ENCODE measurements at regions of chr7 and their contacts with region 1.

Region 1: GRCh38 chr7:112206238-112207044 is at the starts of genes DOCK4 and ZNF277:
- DNase-seq: peak; percentile 99
- H3K4me3 Mint-ChIP-seq: peak within 1 kb of the TSS; percentile 86
- H3K27ac Mint-ChIP-seq: peak within 1 kb of the TSS; percentile 73
- H3K4me1 Mint-ChIP-seq: peaks cover 27% of the 10 kb centered on the region
- H3K27me3 Mint-ChIP-seq: peaks cover 30% of the 10 kb centered on the region
- total RNA-seq, gene DOCK4: 0.36 to 1.1 TPM
- total RNA-seq, gene ZNF277: 24.9 to 26.6 TPM

Region 2: DNA sequence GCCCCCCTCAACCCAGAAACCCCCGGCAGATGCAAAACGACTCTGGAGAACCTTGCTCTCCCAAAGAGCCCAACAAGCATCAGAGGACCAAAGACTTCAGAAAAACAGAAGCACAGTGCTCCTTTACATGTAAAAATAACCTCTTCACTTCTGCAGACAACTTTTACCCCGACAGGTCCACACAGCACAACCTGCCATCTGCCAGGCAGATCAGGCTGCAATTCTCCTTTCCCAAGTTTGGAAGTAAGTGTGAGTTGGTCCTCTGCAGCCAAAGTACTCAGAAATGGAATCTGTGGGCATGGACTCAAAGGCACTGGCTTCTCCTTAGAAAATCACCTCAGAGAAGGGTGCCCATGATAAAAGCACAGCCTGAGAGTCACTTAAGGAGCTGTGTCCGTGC is 26.2 kb before region 1 on chr7:
- CTCF ChIA-PET with region 1: no interaction called
- POLR2A ChIA-PET with region 1: no interaction called
- intact Hi-C with region 1: no loop called
- DNase-seq: no peak
- H3K4me3 Mint-ChIP-seq: no peak overlapping the region
- H3K27ac Mint-ChIP-seq: no peak overlapping the region
- H3K4me1 Mint-ChIP-seq: no peaks in the 10 kb centered on the region
- H3K27me3 Mint-ChIP-seq: peaks cover 20% of the 10 kb centered on the region

Region 3: DNA sequence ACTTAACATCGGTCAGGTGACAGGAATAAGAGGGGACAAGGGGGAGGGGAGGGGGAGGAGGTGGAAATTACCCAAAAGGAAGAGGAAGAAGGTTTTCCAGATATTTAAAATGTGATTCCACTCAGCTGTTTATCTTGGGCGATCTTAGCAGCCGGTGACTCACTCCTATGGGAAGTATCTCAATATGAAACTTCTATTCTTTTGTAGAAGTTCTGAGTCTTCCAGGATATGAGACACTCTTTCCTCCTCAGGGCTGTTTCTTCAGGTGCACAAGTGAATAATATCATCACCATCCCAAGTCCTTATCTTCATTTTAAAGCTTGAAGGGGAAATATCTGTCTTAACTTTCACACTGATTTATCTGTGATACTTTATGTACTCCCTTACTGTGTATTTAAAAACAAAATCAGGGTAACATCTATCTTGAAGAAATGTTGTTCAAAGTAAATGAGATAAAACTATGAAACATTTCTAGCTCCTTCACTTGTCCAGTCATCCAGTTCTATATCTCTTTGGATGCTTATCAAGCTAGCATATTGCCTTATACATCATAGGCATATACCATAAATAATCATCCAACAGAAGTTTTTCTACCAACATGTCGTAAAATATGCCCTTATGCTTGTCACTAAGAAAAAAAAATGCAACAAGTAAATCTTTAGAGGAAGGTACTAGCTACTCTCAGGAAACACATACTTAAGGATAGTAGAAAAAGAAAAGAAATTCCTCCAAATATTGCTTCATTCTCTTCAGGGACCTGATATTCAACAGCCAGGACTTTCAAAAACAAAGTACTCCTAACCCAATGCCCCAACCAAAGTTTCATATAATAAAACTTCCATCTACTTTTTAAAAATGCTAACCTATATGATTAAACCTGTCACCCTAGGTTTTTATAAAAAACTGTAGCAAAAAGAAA is 13.9 kb before region 1 on chr7:
- CTCF ChIA-PET with region 1: no interaction called
- POLR2A ChIA-PET with region 1: interaction called, 3 read pairs
- intact Hi-C with region 1: loop called (anchors 1 kb)
- DNase-seq: no peak
- H3K4me3 Mint-ChIP-seq: no peak overlapping the region
- H3K27ac Mint-ChIP-seq: no peak overlapping the region
- H3K4me1 Mint-ChIP-seq: no peaks in the 10 kb centered on the region
- H3K27me3 Mint-ChIP-seq: peaks cover 31% of the 10 kb centered on the region

Region 4: DNA sequence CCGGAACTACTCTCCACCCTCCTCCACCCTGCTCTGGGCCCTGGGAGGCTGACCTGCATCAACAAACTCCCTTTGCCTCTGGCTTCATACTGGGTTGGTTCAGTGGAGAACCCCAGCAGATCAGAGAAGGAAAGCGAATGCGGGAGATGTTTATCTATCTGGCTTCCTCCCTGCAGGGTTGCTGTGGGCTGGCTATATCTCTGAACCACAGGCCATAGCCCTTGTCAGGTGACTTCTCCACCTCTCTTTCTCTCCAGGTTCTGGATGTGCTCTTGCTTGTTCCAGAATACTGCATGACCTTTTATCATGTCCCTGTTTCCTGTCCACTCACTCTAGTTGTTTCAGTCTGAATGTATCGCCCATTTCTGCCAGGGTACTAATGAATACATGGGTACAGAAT is 192.1 kb after region 1 on chr7:
- CTCF ChIA-PET with region 1: no interaction called
- POLR2A ChIA-PET with region 1: no interaction called
- intact Hi-C with region 1: loop called (anchors 2 kb)
- DNase-seq: no peak
- H3K4me3 Mint-ChIP-seq: no peak overlapping the region
- H3K27ac Mint-ChIP-seq: no peak overlapping the region
- H3K4me1 Mint-ChIP-seq: peaks cover 13% of the 10 kb centered on the region
- H3K27me3 Mint-ChIP-seq: peaks cover 4% of the 10 kb centered on the region

Region 5: DNA sequence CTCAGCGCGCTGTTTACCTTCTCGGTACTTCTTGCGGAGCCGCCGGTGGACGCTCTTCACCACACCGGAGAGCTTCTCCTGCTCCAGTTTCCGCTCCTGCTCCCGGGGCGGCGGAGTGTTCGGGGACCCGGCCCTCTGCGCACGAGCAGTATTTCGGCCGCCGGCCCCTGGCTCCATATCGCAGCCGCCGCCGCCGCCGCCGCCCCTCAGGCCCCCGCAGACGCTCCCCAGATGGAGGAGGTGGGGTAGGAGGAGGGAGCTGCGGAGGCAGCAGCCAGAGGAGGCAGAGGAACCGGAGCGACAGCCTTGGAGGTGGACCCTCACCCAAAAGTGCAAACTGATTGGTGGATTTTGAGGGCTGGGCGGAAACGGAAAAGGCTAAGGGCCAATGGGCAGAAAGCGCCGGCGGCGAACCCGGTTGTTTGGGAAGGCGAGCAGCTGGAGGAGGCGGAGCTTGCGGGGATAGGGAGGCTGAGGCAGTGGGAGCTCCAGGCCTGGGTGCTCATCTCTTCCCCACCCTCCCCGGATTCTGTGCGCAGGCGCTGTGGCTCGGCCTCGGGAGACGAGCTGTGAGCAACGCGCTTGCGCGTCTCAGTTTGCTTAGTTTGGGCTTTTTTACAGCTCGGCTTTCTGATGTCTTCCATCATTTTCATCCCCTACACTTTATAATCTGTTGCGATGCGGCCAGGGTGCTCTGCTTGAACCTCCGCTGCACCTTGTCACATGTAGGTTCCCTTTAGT is 733.3 kb after region 1 on chr7:
- CTCF ChIA-PET with region 1: no interaction called
- POLR2A ChIA-PET with region 1: no interaction called
- intact Hi-C with region 1: loop called (anchors 1 kb)
- DNase-seq: peak; percentile 100
- H3K4me3 Mint-ChIP-seq: peak overlapping the region; percentile 87
- H3K27ac Mint-ChIP-seq: peak overlapping the region; percentile 93
- H3K4me1 Mint-ChIP-seq: peaks cover 34% of the 10 kb centered on the region
- H3K27me3 Mint-ChIP-seq: peaks cover 2% of the 10 kb centered on the region

Measured in activated CD4-positive, alpha-beta memory T cell treated with anti-CD3 and anti-CD28 coated beads for 36 hours (primary cell).